ENCODE measurements at regions of chr6 and their contacts with region 1.

Region 1: DNA sequence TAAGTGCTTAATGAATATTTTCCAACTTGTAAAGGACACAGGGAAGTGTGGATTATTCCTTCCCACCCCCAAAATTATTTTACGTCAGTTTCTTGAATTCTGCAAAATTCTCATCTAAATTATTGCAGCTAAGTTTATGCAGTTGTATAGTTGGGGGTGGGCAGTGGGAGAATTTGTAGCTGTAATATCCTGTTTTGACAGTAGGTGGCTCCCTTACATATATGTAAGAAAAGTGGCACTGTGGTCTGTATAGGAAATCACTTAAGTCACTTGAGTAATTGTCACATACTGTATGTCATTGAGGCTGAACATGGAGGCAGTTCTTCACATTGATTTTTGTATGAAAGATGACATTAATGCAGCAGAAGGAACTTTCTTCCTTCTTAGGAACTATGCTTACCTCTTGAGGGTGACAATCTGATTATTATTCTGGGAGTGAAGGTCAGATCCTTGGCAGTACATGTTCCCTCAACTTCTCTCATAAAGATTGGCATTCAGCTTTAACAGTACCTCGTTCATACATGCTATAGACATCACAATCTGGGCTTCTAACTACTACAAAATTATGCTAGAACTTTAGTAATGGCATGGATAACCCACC is 14.7 kb upstream of the CFAP206 start:
- DNase-seq: peak; percentile 70
- ATAC-seq: peak; percentile 96
- H3K4me3 ChIP-seq: no peak overlapping the region
- H3K27ac ChIP-seq: no peak overlapping the region
- H3K4me1 ChIP-seq: no peaks in the 10 kb centered on the region
- H3K27me3 ChIP-seq: no peaks in the 10 kb centered on the region
- CTCF ChIP-seq: peak; percentile 71
- POLR2A ChIP-seq: no peak
- RAD21 ChIP-seq: peak; percentile 64

Region 2: GRCh38 chr6:87139236-87139635 is 253.9 kb before region 1 on chr6:
- CTCF ChIA-PET with region 1: interaction called, 3 read pairs
- POLR2A ChIA-PET with region 1: no interaction called
- dilution Hi-C with region 1: no loop called
- in situ Hi-C with region 1: no loop called
- intact Hi-C with region 1: loop called (anchors 2 kb)
- DNase-seq: peak; percentile 62
- ATAC-seq: peak; percentile 79
- H3K4me3 ChIP-seq: no peak overlapping the region
- H3K27ac ChIP-seq: no peak overlapping the region
- H3K4me1 ChIP-seq: no peaks in the 10 kb centered on the region
- H3K27me3 ChIP-seq: peaks cover 2% of the 10 kb centered on the region
- CTCF ChIP-seq: peak; percentile 71
- POLR2A ChIP-seq: no peak
- RAD21 ChIP-seq: peak; percentile 81

Region 3: DNA sequence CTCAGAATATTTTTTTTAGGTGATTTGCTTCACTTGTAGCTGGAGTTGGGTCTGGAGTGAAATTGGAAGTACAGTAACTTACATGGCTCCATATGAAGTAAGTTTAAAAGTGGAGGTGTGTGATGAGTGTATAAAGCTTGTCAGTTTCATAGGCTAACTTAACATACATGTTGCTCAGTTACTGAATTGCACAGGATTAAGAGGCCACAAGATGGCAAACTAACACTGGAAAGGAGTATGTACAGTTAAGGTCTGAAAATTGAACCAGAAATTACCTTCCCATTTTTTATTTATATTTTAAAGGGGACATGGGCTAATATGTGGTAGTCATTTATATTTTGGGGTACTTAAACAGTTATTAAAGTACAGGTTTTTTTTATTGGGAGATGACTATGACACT is 116.0 kb before region 1 on chr6:
- CTCF ChIA-PET with region 1: no interaction called
- POLR2A ChIA-PET with region 1: no interaction called
- dilution Hi-C with region 1: no loop called
- in situ Hi-C with region 1: no loop called
- intact Hi-C with region 1: loop called (anchors 1 kb)
- DNase-seq: peak; percentile 15
- ATAC-seq: no peak
- H3K4me3 ChIP-seq: no peak overlapping the region
- H3K27ac ChIP-seq: no peak overlapping the region
- H3K4me1 ChIP-seq: peaks cover 2% of the 10 kb centered on the region
- H3K27me3 ChIP-seq: no peaks in the 10 kb centered on the region
- CTCF ChIP-seq: 0 out of 2 replicates have a peak, but pooled peaks have one; percentile 16
- POLR2A ChIP-seq: no peak
- RAD21 ChIP-seq: no peak

Region 4: GRCh38 chr6:87366072-87366827 is 26.9 kb before region 1 on chr6:
- CTCF ChIA-PET with region 1: no interaction called
- POLR2A ChIA-PET with region 1: interaction called, 11 read pairs
- dilution Hi-C with region 1: no loop called
- in situ Hi-C with region 1: no loop called
- intact Hi-C with region 1: no loop called
- DNase-seq: peak; percentile 8
- ATAC-seq: no peak
- H3K4me3 ChIP-seq: no peak overlapping the region
- H3K27ac ChIP-seq: no peak overlapping the region
- H3K4me1 ChIP-seq: no peaks in the 10 kb centered on the region
- H3K27me3 ChIP-seq: no peaks in the 10 kb centered on the region
- CTCF ChIP-seq: no peak
- POLR2A ChIP-seq: no peak
- RAD21 ChIP-seq: no peak

Region 5: GRCh38 chr6:87799651-87800050 is 406.5 kb after region 1 on chr6:
- CTCF ChIA-PET with region 1: no interaction called
- POLR2A ChIA-PET with region 1: no interaction called
- dilution Hi-C with region 1: no loop called
- in situ Hi-C with region 1: no loop called
- intact Hi-C with region 1: loop called (anchors 2 kb)
- DNase-seq: no peak
- ATAC-seq: no peak
- H3K4me3 ChIP-seq: no peak overlapping the region
- H3K27ac ChIP-seq: no peak overlapping the region
- H3K4me1 ChIP-seq: no peaks in the 10 kb centered on the region
- H3K27me3 ChIP-seq: peaks cover 2% of the 10 kb centered on the region; the same call in 1 of the 2 replicates
- CTCF ChIP-seq: no peak
- POLR2A ChIP-seq: no peak
- RAD21 ChIP-seq: no peak

Region 6: DNA sequence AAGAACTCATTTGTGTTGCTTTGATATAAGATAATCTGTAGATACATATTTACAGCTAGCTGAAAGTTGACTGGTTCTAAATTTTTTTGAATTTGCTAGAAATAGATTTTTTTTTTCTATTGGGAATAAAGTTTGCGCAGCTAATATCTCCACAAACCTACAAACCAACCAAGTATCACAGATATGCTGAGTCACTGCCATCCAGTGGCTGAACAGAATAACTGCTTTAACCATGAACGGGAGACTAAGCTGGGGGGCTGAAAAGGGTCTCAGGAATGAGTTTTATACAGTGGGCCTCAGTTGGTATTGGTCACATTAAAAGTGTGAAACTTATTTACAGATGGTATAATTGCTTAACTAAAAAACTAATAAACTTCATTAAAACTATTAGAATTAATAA is 1099.7 kb after region 1 on chr6:
- CTCF ChIA-PET with region 1: interaction called, 3 read pairs
- POLR2A ChIA-PET with region 1: no interaction called
- dilution Hi-C with region 1: no loop called
- in situ Hi-C with region 1: no loop called
- intact Hi-C with region 1: loop called (anchors 10 kb)
- DNase-seq: peak; percentile 28
- ATAC-seq: peak; percentile 44; the same call in 1 of the 2 replicates
- H3K4me3 ChIP-seq: no peak overlapping the region
- H3K27ac ChIP-seq: no peak overlapping the region
- H3K4me1 ChIP-seq: no peaks in the 10 kb centered on the region
- H3K27me3 ChIP-seq: no peaks in the 10 kb centered on the region
- CTCF ChIP-seq: peak; percentile 36
- POLR2A ChIP-seq: no peak
- RAD21 ChIP-seq: peak; percentile 32; the same call in 1 of the 2 replicates

Region 7: GRCh38 chr6:88780714-88781389 is 1387.7 kb after region 1 on chr6:
- CTCF ChIA-PET with region 1: no interaction called
- POLR2A ChIA-PET with region 1: no interaction called
- dilution Hi-C with region 1: no loop called
- in situ Hi-C with region 1: no loop called
- intact Hi-C with region 1: loop called (anchors 10 kb)
- DNase-seq: peak; percentile 70
- ATAC-seq: peak; percentile 84
- H3K4me3 ChIP-seq: no peak overlapping the region
- H3K27ac ChIP-seq: no peak overlapping the region
- H3K4me1 ChIP-seq: no peaks in the 10 kb centered on the region; the same call in 1 of the 2 replicates
- H3K27me3 ChIP-seq: no peaks in the 10 kb centered on the region
- CTCF ChIP-seq: peak; percentile 82
- POLR2A ChIP-seq: no peak
- RAD21 ChIP-seq: peak; percentile 84